ENCODE measurements at regions of chr18 and their contacts with region 1.

Region 1: DNA sequence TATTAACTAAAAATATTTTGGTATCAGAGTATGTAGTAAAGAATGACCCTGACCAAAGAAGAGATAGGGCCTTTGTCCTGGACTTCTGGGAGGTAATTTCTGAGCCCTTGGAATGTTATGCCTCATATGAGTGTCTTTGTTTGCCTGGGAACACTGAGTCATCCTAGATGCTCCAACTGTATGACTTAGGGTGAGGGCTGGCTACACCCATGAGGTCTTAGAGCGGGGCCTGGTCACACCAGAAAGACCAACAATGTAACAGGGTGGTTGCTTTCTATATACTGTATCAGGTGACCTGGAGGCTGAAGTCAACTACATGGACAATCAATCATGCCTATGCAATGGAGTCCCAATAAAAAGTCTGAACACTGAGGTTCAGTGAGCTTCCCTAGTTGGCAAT is 253.1 kb downstream of the MBD2 start:
- DNase-seq: no peak
- H3K4me3 ChIP-seq: no peak overlapping the region
- CTCF ChIP-seq: no peak
- POLR2A ChIP-seq: no peak

Region 2: DNA sequence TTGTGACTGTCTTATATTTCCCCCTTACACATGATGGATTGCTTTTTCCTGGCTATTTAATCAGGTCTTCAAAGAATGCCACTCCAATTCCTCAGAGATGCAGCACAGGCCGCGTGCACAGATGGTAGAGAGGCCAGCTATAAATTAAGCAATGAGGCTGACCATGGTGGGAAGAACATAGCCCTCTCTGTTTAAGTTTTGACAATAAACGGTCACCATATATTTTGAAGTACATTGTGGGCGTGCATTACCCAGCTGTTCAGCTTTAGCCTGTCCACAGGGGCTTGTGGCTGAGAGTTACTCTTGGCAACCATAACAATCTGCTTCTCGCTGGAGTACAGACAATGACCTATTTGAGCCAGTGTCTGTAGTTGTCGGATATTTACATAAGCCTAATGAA is 900.5 kb before region 1 on chr18:
- intact Hi-C with region 1: loop called (anchors 10 kb)
- DNase-seq: no peak
- H3K4me3 ChIP-seq: no peak overlapping the region
- CTCF ChIP-seq: no peak
- POLR2A ChIP-seq: no peak

Measured in lower leg skin (tissue), 4 donors.